Lower leg skin (tissue), 4 donors: ENCODE measurements at regions of chr2 and their contacts with region 1.

Region 1: GRCh38 chr2:151228847-151229497 is 32.7 kb downstream of the RBM43 start:
- DNase-seq: no peak
- H3K4me3 ChIP-seq: no peak overlapping the region
- CTCF ChIP-seq: no peak
- POLR2A ChIP-seq: no peak

Region 2: DNA sequence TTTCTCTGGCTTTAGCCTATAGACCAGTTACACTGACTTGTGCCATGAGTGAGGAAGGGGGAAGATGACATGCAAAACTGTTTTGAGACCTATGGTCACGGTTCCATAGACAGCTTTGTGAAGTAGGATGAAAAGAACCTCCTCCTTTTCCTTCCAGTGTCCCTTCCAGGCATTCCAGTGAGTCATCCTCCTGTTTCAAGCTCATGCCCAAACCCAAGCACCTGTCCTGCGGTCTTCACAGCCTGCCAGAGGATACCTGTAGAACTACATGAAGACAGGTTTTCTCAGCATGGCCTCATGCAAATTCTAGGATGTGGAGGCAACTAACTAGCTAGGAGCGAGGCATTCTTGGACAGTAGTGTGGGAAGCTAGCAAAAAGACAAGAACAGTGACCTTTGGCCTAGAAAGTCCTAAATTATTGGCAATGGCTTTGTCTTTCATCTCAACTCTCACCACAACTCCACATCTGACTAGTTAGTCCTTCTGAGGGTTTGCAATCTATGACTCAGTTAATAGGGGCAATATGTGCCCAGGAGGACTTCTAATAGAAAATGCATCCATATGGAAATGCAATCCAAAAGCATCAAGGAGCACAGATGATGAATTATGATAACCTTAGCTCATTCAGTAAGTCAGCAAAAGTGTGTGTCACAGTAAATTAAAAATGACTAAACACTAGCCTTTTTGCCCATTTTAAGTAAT is 122.0 kb before region 1 on chr2:
- intact Hi-C with region 1: loop called (anchors 10 kb)
- DNase-seq: no peak
- H3K4me3 ChIP-seq: no peak overlapping the region
- CTCF ChIP-seq: no peak
- POLR2A ChIP-seq: no peak

Region 3: DNA sequence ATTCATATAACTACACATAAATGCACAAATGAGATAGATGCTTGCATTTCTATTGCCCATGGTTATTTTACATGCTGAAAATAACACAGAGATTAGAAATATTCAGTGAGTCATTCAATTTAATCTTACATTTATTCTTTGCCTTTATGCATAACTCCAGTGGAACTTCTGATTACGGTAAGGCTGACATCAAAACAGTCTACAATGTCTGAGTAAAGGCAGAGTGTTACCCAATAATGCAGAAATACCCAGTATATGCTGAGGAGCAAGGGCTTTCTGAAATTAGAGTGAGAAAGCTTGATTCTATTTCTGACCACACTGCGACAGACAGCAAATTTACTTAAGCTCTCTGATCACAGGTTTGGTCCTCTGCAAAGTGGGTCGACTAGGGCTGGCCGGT is 51.3 kb after region 1 on chr2:
- intact Hi-C with region 1: no loop called
- DNase-seq: no peak
- H3K4me3 ChIP-seq: no peak overlapping the region
- CTCF ChIP-seq: no peak
- POLR2A ChIP-seq: no peak

Region 4: DNA sequence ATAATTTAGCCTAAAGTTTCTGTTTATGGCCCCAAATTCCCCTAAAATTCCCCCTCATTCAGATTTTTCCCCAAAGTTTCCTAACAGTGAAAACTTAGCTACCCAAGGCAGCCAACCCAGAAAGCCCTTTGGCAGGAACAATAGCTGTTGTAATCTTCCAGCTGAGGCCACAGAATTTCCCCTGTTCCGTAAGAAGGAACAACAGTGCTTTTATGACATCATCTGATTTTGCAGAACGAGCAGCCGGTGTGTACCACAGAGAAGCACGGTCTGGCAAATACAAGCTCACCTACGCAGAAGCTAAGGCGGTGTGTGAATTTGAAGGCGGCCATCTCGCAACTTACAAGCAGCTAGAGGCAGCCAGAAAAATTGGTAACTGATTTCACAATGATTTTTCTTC is 134.7 kb after region 1 on chr2:
- intact Hi-C with region 1: no loop called
- DNase-seq: peak in 1 of 2 donors; percentile 24
- H3K4me3 ChIP-seq: no peak overlapping the region
- CTCF ChIP-seq: no peak
- POLR2A ChIP-seq: no peak

Region 5: GRCh38 chr2:151374426-151374825 is 145.5 kb after region 1 on chr2:
- intact Hi-C with region 1: no loop called
- DNase-seq: no peak
- H3K4me3 ChIP-seq: no peak overlapping the region
- CTCF ChIP-seq: no peak
- POLR2A ChIP-seq: no peak

Region 6: DNA sequence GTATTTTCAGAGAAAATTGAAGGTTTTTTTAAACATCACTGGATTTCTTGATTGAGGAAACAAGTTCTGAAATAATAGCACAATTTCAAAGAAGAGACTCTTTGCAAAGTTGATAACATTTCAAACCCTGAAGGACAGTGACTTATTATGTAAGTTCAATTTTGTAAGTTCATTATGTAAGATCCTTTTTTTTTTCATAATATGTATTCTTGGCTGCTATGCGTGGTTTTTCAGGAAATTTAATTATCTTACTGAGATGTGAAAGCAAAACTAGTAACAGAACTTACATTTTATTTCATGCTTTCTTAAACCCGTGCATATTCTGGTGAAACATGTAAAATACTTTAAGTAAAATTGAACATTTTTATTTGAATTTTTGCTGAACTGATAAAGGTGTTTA is 246.1 kb after region 1 on chr2:
- intact Hi-C with region 1: no loop called
- DNase-seq: no peak
- H3K4me3 ChIP-seq: no peak overlapping the region
- CTCF ChIP-seq: no peak
- POLR2A ChIP-seq: no peak